ENCODE measurements at regions of chr6 and their contacts with region 1.

Region 1: GRCh38 chr6:52598123-52598823 is 21.4 kb upstream of the TRAM2 start:
- DNase-seq: no peak
- CTCF ChIP-seq: peak; percentile 39

Region 2: DNA sequence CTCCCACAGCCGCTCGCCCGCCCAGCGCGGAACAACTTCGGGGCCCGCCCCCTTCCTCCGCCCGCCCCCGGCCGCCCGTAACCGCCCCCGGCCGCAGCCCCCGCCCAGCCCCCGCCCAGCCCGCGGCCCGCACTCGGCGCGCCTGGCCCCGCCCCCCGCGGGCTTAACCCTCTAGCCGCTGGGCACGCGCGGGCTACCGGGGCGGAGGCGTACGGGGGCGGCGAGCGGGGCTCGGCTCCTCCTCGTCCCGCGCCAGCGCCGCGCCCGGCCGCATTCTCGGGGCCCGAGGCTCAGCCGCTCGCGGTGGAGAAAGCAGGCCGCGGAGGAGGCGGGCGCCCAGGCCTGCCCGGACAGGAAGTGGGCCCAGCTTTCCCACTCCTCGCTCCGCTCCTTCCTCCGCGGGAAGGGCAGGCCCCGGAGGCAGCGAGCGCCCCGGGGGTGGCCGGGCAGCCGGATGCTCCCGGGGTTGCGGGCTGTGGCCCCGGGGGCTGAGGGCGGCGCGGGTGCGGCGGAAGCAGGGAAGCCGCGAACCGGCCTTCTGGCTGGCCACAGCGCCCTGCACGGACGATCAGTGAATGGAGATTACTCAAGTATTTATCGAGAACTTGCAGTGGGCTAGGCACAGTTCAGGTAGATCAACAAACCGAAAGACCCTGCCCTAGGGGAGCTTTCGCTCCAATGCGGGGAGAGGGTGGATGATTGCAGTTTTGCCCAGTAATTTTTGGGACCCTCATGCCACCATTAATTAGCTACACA is 21.1 kb before region 1 on chr6 and contains the start of gene TRAM2:
- CTCF ChIA-PET with region 1: interaction called, 21 read pairs
- POLR2A ChIA-PET with region 1: no interaction called
- DNase-seq: peak; percentile 84
- CTCF ChIP-seq: no peak

Region 3: DNA sequence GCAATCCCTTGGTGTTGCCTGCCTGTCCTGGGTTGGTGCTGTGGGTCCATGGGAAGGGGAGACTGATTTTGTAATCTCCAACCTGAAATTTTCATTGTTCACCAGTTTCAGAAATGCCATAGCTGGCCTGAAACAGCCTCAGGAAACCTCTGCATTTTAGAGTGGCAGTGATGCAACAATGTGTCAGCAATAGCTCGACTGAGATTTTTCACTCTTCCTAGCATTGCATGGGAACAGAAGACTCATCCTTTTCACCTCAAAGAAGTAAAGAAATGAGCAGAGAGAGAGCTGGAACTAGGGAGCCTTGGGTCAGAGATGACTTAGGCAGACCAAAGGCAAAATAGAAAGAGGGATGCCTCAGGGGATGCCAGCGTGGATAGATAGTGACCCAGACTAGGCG is 48.9 kb after region 1 on chr6:
- CTCF ChIA-PET with region 1: interaction called, 18 read pairs
- POLR2A ChIA-PET with region 1: no interaction called
- DNase-seq: no peak
- CTCF ChIP-seq: no peak

Region 4: GRCh38 chr6:52664186-52664990 is 66.1 kb after region 1 on chr6:
- CTCF ChIA-PET with region 1: interaction called, 18 read pairs
- POLR2A ChIA-PET with region 1: no interaction called
- DNase-seq: peak; percentile 95
- CTCF ChIP-seq: no peak

Region 5: GRCh38 chr6:52887910-52888535 is 289.8 kb after region 1 on chr6:
- CTCF ChIA-PET with region 1: no interaction called
- POLR2A ChIA-PET with region 1: no interaction called
- DNase-seq: no peak
- CTCF ChIP-seq: no peak

Measured in GM10248 (cell line).